Activated naive CD8-positive, alpha-beta T cell treated with anti-CD3 and anti-CD28 coated beads, Interleukin-2, amount 10 ng/mL, durations not matched to agents 7 days and 5 days (primary cell): ENCODE measurements at regions of chr1 and their contacts with region 1.

Region 1: DNA sequence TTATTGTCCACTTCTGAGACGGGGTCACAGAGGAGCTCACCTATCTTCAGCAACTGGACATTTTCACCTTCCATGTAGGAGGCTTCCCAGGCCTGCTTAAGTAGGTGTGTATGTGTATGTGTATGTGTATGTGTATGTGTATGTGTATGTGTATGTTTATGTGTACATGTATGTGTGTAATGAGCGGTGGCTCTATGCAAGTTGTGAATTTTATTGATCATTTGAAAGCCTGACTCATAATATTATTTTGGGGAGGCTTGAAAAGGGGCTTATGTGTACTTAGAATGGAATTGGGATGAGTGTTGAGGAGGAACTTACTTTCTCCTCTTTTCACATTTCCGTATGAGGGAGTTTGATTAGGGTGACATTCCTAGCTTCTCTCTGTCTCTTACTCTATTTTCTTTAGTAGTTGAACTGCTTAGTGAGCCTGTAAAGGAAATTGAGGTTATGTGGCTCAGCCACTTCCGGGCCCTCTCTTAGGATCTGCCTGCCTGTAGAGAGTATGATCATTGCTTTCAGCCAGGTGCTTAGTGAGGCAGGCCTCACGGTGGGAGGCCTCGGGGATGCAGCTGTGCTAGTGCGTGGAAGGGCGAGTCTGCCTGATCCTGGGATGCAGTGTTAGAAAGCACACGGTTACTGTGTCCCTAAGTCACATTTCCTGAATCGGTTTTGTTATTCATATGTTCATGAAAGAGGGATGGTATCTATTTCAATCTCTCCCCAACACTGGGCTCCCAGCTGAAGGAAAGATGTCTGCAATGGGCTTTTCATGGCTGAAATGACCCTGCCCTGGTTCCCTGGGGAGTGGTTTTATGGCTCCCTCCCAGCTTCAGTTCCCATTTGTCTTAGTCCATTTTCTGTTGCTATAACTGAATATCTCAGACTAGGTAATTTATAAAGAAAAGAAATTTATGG is 61.1 kb downstream of the IER5 start:
- DNase-seq: peak; percentile 76
- ATAC-seq: peak; percentile 99
- H3K4me3 Mint-ChIP-seq: peak overlapping the region; percentile 74
- H3K27ac Mint-ChIP-seq: peak overlapping the region; percentile 88
- H3K4me1 Mint-ChIP-seq: peaks cover 41% of the 10 kb centered on the region
- H3K27me3 Mint-ChIP-seq: peaks cover 12% of the 10 kb centered on the region

Region 2: DNA sequence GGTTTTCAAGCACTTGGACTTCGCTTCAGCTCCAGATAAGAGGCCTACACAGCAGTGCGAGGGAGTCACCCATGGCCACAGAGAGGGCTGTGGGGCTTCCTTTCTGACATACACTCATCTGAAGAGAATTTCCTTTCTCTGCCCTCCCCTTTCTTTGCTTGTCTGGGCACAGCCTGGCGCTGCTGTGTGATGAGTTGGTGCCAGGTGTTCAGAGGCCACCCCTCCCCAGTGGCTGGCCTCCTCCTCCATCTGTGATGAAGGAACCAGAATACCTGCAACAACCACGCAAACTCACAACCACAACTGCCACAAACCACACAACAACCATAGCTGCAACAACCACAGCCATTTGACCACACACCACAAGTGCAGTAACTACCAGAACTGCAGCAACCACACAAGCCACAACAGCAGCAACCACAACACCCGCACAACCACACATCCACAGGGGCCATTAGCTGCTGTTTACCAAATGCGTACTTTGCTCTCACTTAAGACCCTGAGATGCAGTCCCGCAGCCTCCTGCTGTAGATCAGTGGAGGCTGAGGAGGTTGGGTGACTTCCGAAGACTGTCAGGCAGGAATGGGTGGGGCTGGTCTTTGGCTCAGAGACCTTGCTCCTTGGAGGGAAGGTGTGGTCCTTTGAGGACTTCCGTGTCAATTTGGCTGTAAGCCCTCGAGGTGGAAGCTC is 10.0 kb after region 1 on chr1:
- POLR2A ChIA-PET with region 1: interaction called, 11 read pairs
- DNase-seq: peak; percentile 77
- ATAC-seq: peak; percentile 85
- H3K4me3 Mint-ChIP-seq: peak overlapping the region; percentile 58
- H3K27ac Mint-ChIP-seq: peak overlapping the region; percentile 86
- H3K4me1 Mint-ChIP-seq: peaks cover 21% of the 10 kb centered on the region
- H3K27me3 Mint-ChIP-seq: peaks cover 17% of the 10 kb centered on the region

Region 3: DNA sequence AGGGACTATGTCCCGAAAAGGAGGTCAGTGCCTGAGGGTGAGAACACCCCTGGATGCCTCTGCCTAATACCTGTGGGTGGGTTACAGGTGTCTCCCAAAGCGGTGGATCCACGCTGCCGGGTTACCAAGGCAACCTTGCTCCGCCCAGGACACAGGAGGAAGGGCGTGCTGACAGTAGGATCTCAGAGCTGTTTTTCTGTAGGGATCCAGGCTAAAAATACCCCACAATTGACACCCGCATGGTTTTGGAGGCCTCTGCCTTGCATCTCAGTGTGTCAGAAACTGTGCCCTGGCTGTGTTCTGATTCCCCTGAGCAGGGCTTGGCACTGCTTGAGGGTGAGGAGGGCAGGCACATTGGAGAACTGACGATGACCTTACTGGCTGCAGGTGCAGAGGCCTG is 56.9 kb after region 1 on chr1:
- POLR2A ChIA-PET with region 1: no interaction called
- DNase-seq: no peak
- ATAC-seq: no peak
- H3K4me3 Mint-ChIP-seq: no peak overlapping the region
- H3K27ac Mint-ChIP-seq: no peak overlapping the region
- H3K4me1 Mint-ChIP-seq: peaks cover 3% of the 10 kb centered on the region
- H3K27me3 Mint-ChIP-seq: peaks cover 5% of the 10 kb centered on the region